ENCODE measurements at regions of chr6 and their contacts with region 1.

Region 1: GRCh38 chr6:31665501-31666336 is at the start of gene CSNK2B:
- DNase-seq: peak; percentile 99
- H3K4me3 Mint-ChIP-seq: peak within 1 kb of the TSS; percentile 86
- H3K27ac Mint-ChIP-seq: peak within 1 kb of the TSS; percentile 89
- H3K4me1 Mint-ChIP-seq: peaks cover 74% of the 10 kb centered on the region
- H3K27me3 Mint-ChIP-seq: no peaks in the 10 kb centered on the region
- total RNA-seq, gene CSNK2B: 199 to 212 TPM

Region 2: DNA sequence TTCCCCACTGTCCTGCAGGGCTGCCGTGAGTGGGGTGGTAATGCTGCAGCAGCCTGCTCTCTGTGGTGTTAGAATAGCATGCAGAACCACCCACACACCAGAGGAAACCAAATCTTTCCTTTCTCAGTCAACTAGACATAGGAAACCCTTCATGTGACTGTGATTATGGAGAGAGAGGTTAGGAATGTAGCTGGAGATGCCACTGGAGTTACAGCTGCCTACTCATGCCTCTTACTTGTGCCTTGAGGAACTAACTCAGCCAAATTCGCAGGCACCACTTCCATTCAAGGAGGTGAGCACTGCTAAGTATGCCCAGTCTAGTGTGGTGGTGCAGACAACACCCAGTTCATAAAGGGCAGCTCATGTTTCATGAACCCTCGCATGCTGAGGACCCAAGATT is 628.0 kb before region 1 on chr6:
- CTCF ChIA-PET with region 1: no interaction called
- POLR2A ChIA-PET with region 1: no interaction called
- DNase-seq: no peak
- H3K4me3 Mint-ChIP-seq: no peak overlapping the region
- H3K27ac Mint-ChIP-seq: no peak overlapping the region
- H3K4me1 Mint-ChIP-seq: no peaks in the 10 kb centered on the region
- H3K27me3 Mint-ChIP-seq: peaks cover 24% of the 10 kb centered on the region

Region 3: DNA sequence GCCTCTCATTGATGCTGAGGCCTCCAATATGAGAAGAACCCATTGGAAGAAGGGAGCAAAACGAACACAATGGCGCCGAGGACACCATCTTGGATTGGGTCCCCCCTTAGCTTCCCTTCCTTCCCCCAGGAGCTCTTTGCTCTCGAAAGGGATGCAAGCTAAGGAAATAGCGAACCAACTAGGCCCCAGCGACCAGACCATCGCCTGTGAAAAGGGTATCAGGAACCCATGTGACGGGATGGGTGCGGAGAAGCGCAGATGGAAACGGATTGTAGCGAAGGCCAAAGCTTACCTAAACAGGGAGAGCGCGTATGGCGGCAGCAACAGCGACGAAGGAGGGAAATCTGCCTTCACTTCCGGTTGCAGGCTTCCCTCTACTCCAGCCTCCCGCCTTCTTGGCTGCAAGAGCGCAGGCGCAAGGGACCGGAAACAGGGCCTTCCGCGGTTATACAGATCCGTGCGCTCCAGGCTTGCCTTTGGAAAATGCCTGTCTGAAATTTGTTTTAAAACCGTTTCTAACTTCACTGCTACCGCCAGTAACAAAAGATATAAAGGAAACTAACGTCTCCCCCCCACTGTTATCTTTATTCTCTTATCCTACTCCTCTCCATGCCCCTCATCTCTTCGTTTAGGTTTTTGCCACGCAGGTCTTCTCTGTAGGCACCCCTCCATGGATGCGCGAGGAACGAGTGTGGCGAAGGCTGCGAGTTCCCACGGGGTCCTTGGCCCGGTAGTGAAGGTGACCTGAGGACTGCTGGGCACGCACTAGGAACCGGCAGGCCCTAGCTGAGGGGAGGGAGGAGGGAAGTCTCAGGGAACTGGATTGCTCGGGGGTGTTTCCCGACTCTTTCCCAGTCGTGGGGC is 123.8 kb before region 1 on chr6 and contains the start of gene DDX39B:
- CTCF ChIA-PET with region 1: interaction called, 4 read pairs
- POLR2A ChIA-PET with region 1: interaction called, 26 read pairs
- DNase-seq: peak; percentile 94
- H3K4me3 Mint-ChIP-seq: peak within 1 kb of the TSS; percentile 89
- H3K27ac Mint-ChIP-seq: peak within 1 kb of the TSS; percentile 75
- H3K4me1 Mint-ChIP-seq: peaks cover 52% of the 10 kb centered on the region
- H3K27me3 Mint-ChIP-seq: no peaks in the 10 kb centered on the region
- total RNA-seq, gene DDX39B: 427 to 434 TPM

Region 4: DNA sequence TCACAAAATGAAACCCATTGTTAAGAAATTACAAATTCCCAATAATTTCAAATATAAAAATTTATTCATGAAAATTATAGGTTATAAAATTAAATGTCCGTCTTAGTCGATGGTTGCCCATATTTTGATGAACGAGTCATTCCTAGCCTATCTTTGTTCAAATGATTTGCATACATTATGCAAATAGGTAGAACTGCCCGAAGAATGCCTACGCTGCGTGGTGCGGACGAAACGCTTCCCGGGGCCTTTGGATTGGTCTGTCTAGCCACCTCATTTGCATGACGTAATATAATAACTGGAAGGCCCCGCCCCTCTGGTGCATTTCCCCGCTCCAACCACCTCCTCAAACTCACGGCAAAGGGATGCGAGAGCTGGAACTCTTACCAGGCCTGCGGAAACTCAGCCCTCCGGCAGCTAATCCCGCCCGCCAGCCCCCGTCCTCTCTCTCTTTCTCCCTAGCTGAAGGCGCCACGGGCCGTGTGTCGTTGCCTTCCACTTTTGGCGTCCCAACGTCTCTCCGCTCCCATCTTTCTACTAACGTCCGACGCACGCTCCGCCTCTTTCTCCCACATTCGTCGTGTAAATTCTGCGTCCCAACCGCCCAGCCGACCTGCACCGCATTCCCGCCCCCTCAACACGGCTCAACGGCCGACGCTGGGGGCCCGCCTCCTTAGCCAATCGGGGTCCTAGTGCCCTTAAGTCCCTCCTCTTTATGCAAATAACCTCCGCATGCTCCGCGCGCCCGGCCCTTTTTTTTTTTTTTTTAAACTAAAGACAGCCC is 45.7 kb before region 1 on chr6:
- CTCF ChIA-PET with region 1: no interaction called
- POLR2A ChIA-PET with region 1: interaction called, 37 read pairs
- DNase-seq: peak; percentile 98
- H3K4me3 Mint-ChIP-seq: peak overlapping the region; percentile 81
- H3K27ac Mint-ChIP-seq: peak overlapping the region; percentile 95
- H3K4me1 Mint-ChIP-seq: peaks cover 50% of the 10 kb centered on the region
- H3K27me3 Mint-ChIP-seq: no peaks in the 10 kb centered on the region

Region 5: DNA sequence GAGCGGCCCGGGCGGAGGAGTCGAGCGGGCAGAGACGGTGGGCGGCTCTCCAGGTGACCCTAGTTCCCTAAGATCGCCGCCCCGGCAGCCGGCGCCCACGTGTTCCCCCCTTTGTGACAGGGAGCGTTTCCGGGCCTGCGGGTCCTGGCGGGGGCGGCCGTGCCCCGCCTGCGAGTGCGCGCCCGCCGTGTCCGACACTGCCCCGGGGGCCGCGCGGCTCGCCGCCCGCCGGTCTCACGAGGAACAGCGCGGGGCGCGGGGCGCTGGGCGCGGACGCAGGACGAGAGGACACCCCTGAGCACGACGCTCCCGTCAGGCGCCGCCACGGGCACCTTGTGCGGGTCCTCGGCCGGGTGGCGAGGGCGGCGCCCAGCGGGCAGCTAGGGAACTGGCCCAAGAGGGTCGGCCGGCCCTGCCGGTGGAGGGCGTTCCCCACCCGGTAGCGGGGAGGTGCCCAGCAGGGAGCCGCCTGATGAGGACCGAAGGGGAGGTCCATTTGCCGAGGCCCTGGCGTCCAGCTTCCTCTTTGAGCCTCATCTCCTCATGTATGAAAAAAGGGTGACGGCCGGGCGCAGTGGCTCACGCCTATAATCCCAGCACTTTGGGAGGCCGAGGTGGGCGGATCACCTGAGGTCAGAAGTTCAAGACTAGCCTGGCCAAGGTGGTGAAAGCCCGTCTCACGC is 130.0 kb after region 1 on chr6 and contains the start of gene VARS1:
- CTCF ChIA-PET with region 1: interaction called, 3 read pairs
- POLR2A ChIA-PET with region 1: interaction called, 11 read pairs
- DNase-seq: peak; percentile 86
- H3K4me3 Mint-ChIP-seq: peak within 1 kb of the TSS; percentile 89
- H3K27ac Mint-ChIP-seq: peak within 1 kb of the TSS; percentile 97
- H3K4me1 Mint-ChIP-seq: peaks cover 58% of the 10 kb centered on the region
- H3K27me3 Mint-ChIP-seq: no peaks in the 10 kb centered on the region
- total RNA-seq, gene VARS1: 84.1 to 88.4 TPM

Region 6: GRCh38 chr6:31834434-31835198 is 168.9 kb after region 1 on chr6:
- CTCF ChIA-PET with region 1: interaction called, 4 read pairs
- POLR2A ChIA-PET with region 1: interaction called, 30 read pairs
- DNase-seq: peak; percentile 79
- H3K4me3 Mint-ChIP-seq: peak overlapping the region; percentile 81
- H3K27ac Mint-ChIP-seq: peak overlapping the region; percentile 91
- H3K4me1 Mint-ChIP-seq: peaks cover 56% of the 10 kb centered on the region
- H3K27me3 Mint-ChIP-seq: no peaks in the 10 kb centered on the region

Measured in activated CD4-positive, alpha-beta memory T cell treated with anti-CD3 and anti-CD28 coated beads, Interleukin-2, amount 10 ng/mL, durations not matched to agents 7 days and 5 days (primary cell).